ENCODE measurements at regions of chr1 and their contacts with region 1.

Region 1: DNA sequence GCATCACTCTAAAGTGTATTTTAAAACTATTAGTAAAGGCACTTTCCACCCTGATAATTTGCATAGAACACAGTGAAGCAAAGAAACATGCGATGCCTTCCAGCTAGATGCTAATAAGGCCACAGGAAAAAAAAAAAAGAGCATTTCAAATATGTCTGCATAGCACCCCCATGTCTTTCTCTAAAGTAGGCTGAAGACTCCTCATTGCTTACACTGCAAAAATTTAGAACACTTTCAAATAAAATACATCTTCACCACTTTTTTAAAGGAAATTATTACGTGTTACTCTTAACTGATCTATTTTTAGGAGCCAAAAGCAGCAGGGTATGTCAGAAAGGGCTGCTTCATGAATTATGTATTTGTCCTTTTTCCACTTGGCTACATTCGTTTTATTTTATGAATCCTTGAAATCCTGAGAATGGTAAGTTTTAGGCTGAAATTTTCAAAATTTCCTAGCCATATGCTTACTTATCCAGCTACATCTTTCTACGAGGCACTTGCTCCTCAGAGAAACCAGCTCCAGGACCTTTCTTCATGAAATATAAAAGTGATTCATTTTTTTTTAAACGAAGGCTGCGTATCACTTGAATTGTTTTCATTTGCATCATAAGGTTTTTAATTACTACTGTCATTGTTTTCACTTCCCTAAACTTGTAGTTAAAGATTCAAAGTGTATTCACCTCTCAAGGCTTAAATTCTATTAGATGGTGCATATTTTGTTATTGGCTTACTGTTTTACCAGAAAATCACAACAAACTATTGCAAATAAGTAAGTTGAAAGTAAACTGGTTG is 513.0 kb downstream of the PTPRC start:
- DNase-seq: no peak
- ATAC-seq: no peak
- H3K4me3 ChIP-seq: no peak overlapping the region
- H3K27ac ChIP-seq: no peak overlapping the region
- H3K4me1 ChIP-seq: no peaks in the 10 kb centered on the region
- H3K27me3 ChIP-seq: no peaks in the 10 kb centered on the region
- CTCF ChIP-seq: no peak
- POLR2A ChIP-seq: no peak
- RAD21 ChIP-seq: no peak

Region 2: DNA sequence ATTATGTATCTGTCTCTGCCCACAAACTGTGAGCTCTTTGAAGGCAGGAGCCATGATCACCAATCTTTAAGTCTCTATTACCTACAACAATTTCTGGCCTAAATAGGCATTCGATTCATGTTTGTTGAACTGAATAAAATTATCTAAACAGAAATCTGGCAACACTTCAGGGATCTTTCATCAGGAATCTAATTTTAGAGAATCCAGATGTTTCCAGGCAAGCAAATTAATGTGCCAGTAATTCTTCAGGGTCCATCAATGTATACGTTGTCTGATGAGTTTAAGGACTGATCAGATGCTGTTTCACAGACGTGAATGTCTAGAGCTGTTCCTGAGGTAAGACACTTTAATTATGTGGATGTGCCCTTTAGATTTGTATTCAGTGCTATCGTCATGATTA is 11.4 kb after region 1 on chr1:
- CTCF ChIA-PET with region 1: no interaction called
- POLR2A ChIA-PET with region 1: interaction called, 12 read pairs
- dilution Hi-C with region 1: no loop called
- in situ Hi-C with region 1: no loop called
- intact Hi-C with region 1: no loop called
- DNase-seq: no peak
- ATAC-seq: no peak
- H3K4me3 ChIP-seq: no peak overlapping the region
- H3K27ac ChIP-seq: no peak overlapping the region
- H3K4me1 ChIP-seq: no peaks in the 10 kb centered on the region
- H3K27me3 ChIP-seq: no peaks in the 10 kb centered on the region
- CTCF ChIP-seq: no peak
- POLR2A ChIP-seq: no peak
- RAD21 ChIP-seq: no peak

Region 3: GRCh38 chr1:199202331-199202730 is 50.5 kb after region 1 on chr1:
- CTCF ChIA-PET with region 1: no interaction called
- POLR2A ChIA-PET with region 1: no interaction called
- dilution Hi-C with region 1: no loop called
- in situ Hi-C with region 1: no loop called
- intact Hi-C with region 1: no loop called
- DNase-seq: no peak
- ATAC-seq: no peak
- H3K4me3 ChIP-seq: no peak overlapping the region
- H3K27ac ChIP-seq: no peak overlapping the region
- H3K4me1 ChIP-seq: no peaks in the 10 kb centered on the region
- H3K27me3 ChIP-seq: no peaks in the 10 kb centered on the region
- CTCF ChIP-seq: no peak
- POLR2A ChIP-seq: no peak
- RAD21 ChIP-seq: no peak